Cardiac septum (tissue), 1 donor: ENCODE measurements at regions of chr9 and their contacts with region 1.

Region 1: DNA sequence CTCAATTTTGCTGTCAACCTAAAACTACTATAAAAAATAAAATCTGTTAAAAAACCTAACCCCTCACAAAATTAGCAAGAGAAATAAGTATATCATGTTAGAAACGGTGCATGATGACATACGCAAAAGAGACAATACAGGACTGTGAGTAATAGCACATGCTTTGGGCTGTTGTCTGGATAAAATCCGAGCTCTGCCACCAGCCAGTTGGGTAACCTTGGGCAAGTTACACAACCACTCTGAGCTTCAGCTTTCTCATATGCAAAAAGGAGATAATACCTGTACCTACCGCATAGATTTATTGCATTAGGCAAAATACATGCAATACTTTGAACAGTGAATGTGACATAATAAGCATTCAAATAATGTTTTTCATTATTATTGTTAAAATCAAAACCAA is 481.7 kb downstream of the TLE1 start:
- DNase-seq: no peak

Region 2: GRCh38 chr9:81223986-81224763 is 16.5 kb after region 1 on chr9:
- intact Hi-C with region 1: loop called (anchors 1 kb)
- DNase-seq: no peak